Transverse colon (tissue), 4 donors: ENCODE measurements at regions of chr4 and their contacts with region 1.

Region 1: GRCh38 chr4:152485726-152486276 is 50.1 kb downstream of the FBXW7 start:
- DNase-seq: no peak
- H3K4me3 ChIP-seq: peak overlapping the region in 1 of 4 donors; percentile 4
- H3K27ac ChIP-seq: peak overlapping the region; percentile 59 to 69 (median 65)
- H3K4me1 ChIP-seq: peaks cover 9 to 46% (median 18%) of the 10 kb centered on the region in 4 donors
- H3K27me3 ChIP-seq: no peaks in the 10 kb centered on the region
- CTCF ChIP-seq: peak in 1 of 5 experiments; percentile 9
- EP300 ChIP-seq: no peak
- POLR2A ChIP-seq: no peak

Region 2: GRCh38 chr4:152640058-152640833 is 154.4 kb after region 1 on chr4:
- in situ Hi-C with region 1: loop called in 1 of 4 experiments (anchors 25 kb)
- intact Hi-C with region 1: no loop called
- DNase-seq: no peak
- H3K4me3 ChIP-seq: no peak overlapping the region
- H3K27ac ChIP-seq: no peak overlapping the region
- H3K4me1 ChIP-seq: peaks cover 0 to 20% (median 7%) of the 10 kb centered on the region in 4 donors
- H3K27me3 ChIP-seq: no peaks in the 10 kb centered on the region
- CTCF ChIP-seq: peak; percentile 63 to 72 (median 68)
- EP300 ChIP-seq: no peak
- POLR2A ChIP-seq: no peak

Region 3: GRCh38 chr4:152696764-152697261 is 211.0 kb after region 1 on chr4:
- in situ Hi-C with region 1: no loop called
- intact Hi-C with region 1: no loop called
- DNase-seq: peak; percentile 50
- H3K4me3 ChIP-seq: no peak overlapping the region
- H3K27ac ChIP-seq: no peak overlapping the region
- H3K4me1 ChIP-seq: no peaks in the 10 kb centered on the region
- H3K27me3 ChIP-seq: no peaks in the 10 kb centered on the region
- CTCF ChIP-seq: no peak
- EP300 ChIP-seq: no peak
- POLR2A ChIP-seq: no peak